ENCODE measurements at regions of chr4 and their contacts with region 1.

Region 1: DNA sequence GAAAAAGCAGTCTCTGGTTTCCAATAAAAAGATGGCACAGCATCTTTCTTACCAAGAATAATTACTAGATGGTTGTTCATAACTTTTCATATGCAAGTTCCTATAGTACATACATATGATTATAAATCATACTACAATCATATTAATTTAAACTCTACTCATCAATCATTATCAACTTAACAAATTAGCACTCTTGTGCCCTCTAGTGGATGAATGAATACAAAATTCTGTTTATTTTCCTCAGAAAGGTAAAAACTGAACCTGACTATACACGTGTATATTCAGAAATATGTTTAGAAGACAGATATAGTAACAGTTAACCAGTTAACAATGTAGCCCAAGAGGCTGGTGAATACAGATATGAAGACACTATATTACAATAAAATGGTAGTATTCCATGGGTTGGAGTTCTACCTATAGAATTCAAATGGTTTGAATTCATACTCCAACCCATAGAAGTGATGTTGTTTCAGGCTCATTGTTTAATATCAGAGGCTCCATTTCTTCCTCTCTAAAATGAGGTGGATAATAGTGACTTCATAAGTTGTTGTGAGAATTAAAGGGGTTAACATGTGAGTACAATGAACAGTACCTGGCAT is 100.0 kb downstream of the ADAMTS3 start:
- DNase-seq: no peak
- H3K4me3 ChIP-seq: no peak overlapping the region
- H3K27ac ChIP-seq: no peak overlapping the region
- H3K4me1 ChIP-seq: peaks cover 0 to 3% (median under 1%) of the 10 kb centered on the region in 4 donors
- H3K27me3 ChIP-seq: no peaks in the 10 kb centered on the region
- CTCF ChIP-seq: peak; percentile 33 to 60 (median 55)
- EP300 ChIP-seq: no peak
- POLR2A ChIP-seq: no peak

Region 2: GRCh38 chr4:72295966-72296557 is 172.9 kb before region 1 on chr4:
- intact Hi-C with region 1: loop called (anchors 5 kb)
- DNase-seq: no peak
- H3K4me3 ChIP-seq: no peak overlapping the region
- H3K27ac ChIP-seq: no peak overlapping the region
- H3K4me1 ChIP-seq: peaks cover 0 to 4% (median 0%) of the 10 kb centered on the region in 4 donors
- H3K27me3 ChIP-seq: no peaks in the 10 kb centered on the region
- CTCF ChIP-seq: peak; percentile 56 to 71 (median 63)
- EP300 ChIP-seq: no peak
- POLR2A ChIP-seq: no peak

Region 3: DNA sequence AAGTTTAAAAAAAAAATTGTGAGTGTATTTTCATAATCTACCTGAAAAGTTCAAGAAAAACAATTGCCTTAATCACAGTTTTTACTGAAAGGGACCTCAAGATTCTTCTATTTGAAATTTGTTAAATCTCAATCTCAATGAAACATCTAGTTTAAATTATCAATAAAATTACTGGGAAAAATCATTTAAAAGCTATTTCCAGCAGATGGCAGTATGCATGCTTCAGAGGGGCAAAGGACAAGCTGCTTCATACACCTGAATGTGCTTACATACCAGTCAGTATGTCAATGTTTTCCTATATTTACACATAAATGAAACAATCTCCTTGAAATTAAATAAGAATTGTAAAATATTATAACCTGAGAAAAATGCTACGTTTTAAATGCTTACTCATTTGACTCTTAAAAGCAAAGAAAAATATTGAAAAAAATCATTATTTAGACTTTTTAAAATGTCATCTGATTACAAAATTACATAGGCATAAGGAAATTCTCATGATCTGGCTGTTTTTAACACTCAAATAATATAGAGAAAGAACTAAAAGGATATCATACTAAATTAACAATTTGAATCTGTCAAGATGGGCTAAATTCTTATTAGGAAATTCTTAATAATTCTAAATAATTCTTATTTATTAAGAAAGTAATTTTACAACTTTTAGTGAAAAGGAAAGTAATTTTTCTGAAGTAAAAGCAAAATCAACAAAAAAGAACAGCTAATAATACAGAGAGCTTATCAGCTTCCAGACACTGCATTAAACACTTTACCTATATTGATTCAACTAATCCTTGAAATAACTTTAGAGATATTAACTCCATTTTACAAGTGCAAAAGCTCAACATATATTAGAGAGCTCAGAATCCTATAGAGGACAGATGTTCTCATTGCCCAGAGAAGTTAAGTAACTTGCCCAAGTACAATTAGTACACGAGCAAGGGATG is 142.0 kb before region 1 on chr4:
- intact Hi-C with region 1: loop called (anchors 5 kb)
- DNase-seq: no peak
- H3K4me3 ChIP-seq: no peak overlapping the region
- H3K27ac ChIP-seq: no peak overlapping the region
- H3K4me1 ChIP-seq: no peaks in the 10 kb centered on the region
- H3K27me3 ChIP-seq: no peaks in the 10 kb centered on the region
- CTCF ChIP-seq: peak; percentile 55 to 61 (median 57)
- EP300 ChIP-seq: no peak
- POLR2A ChIP-seq: no peak

Measured in esophagus muscularis mucosa (tissue), 4 donors.